ENCODE measurements at regions of chr4 and their contacts with region 1.

Region 1: GRCh38 chr4:106329041-106329618 is 12.8 kb downstream of the AIMP1 start:
- DNase-seq: no peak
- H3K4me3 ChIP-seq: no peak overlapping the region
- CTCF ChIP-seq: peak; percentile 54

Region 2: DNA sequence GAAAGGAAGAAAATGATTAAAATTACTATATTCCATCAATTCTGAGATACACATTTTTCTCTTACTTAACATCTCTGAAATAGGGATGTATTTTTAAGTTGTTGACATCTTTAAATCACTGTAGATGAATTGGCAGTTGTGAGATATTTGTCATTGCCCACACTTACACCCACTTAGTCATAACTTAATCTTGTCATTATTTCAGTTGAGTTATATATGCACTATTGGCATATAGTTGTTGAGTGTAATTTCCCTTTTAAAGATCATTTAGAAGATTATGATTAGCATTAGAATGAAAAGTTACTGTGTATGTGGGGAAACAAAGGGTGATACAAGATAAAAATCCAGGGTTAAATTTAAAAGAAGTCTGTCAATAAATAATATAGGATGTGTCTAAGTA is 10.6 kb before region 1 on chr4:
- CTCF ChIA-PET with region 1: interaction called, 26 read pairs
- POLR2A ChIA-PET with region 1: no interaction called
- DNase-seq: no peak
- H3K4me3 ChIP-seq: no peak overlapping the region
- CTCF ChIP-seq: no peak

Region 3: DNA sequence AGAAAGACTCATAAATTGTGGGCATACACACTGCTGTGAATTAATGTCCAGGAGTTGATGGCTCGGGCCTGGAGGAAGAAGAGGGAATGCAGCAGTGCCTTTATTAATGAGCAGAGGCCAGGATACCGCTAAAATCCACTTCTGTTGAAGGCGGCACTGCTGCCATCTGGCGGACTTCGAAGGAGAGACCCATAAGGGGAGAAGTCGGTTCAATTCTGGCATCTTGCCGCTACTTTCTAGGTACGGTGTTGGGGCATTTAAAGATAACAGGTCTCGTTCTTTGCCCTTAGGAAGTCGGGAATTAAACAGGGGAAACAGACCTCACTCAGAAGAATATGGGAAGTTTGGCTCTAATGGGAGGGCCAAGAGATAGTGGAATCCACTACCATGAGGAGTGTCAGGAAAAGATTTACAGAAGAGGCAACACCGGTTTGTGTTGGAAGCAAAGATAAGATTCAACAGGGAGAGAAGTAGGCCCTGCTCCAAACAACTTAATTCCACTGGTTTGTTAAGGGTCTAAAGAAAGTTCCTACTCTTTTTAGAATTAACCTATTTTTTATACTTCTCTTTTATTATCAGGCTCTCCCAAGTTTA is 173.1 kb after region 1 on chr4:
- CTCF ChIA-PET with region 1: interaction called, 16 read pairs
- POLR2A ChIA-PET with region 1: no interaction called
- DNase-seq: no peak
- H3K4me3 ChIP-seq: no peak overlapping the region
- CTCF ChIP-seq: peak; percentile 78

Region 4: DNA sequence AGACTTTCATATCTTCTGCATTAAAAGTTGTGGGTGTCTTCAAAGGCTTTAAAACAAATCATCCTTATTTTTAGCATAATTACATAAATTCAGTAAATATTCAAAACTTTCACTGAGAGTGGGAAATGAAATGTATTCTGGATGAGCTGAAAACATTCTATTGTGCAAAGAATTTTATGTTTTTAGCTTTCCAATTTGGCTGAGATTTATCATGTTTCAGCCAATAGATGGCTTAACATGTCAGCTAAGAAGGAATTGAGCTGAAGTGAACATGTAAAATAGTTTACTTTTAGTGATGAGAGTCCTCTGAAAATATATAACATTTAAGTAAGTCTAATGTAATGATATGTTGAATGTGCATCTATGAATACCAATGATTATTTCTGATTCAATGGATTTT is 253.0 kb after region 1 on chr4:
- CTCF ChIA-PET with region 1: no interaction called
- POLR2A ChIA-PET with region 1: no interaction called
- DNase-seq: no peak
- H3K4me3 ChIP-seq: no peak overlapping the region
- CTCF ChIP-seq: no peak

Region 5: DNA sequence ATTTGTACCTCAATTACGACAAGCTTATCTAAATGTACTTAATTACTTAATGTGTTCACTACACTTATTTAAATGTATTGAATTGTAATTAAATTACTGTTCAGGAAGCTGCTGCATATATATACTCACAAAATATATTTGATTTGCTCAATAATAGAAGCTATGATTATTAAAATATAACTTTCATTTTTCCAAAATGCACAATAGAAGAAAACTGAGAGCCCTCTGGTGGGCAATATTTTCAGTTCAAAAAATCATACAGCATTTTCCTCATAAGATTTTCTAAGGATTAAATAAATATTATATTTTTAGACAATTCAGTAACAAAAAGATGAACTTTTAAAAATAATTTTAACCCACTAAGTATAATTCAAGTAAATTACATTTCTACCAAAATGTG is 489.6 kb after region 1 on chr4:
- CTCF ChIA-PET with region 1: interaction called, 13 read pairs
- POLR2A ChIA-PET with region 1: no interaction called
- DNase-seq: no peak
- H3K4me3 ChIP-seq: no peak overlapping the region
- CTCF ChIP-seq: no peak